Astrocyte of the cerebellum (primary cell): ENCODE measurements at regions of chr11 and their contacts with region 1.

Region 1: GRCh38 chr11:100508606-100509005 is 178.5 kb upstream of the ARHGAP42 start:
- DNase-seq: no peak
- H3K4me3 ChIP-seq: no peak overlapping the region
- CTCF ChIP-seq: no peak

Region 2: GRCh38 chr11:100467821-100468508 is 40.6 kb before region 1 on chr11:
- in situ Hi-C with region 1: loop called (anchors 5 kb)
- DNase-seq: no peak
- H3K4me3 ChIP-seq: no peak overlapping the region
- CTCF ChIP-seq: no peak